ENCODE measurements at regions of chr20 and their contacts with region 1.

Region 1: GRCh38 chr20:64232794-64233193 is 22.8 kb upstream of the PCMTD2 start:
- DNase-seq: peak; percentile 53
- ATAC-seq: peak; percentile 49

Region 2: DNA sequence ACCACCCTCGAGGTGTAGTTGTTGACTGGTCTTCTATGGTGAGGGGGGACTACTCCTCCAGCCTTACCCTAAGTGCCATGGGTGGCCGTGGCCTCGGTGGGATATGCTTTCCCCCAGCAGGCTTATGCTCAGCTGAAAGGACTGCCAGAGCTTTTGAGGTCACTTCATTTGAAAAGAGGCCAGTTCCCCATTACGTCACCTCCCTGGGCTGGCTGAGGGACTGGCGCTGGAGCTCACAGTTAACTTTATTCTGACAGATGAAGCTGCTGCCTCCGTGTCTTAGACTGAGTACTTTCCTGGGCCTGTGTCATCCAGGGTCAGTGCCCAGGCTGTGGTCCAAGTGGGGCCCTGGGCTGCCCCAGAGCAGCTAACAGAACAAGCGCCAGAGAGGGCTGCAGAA is 20.0 kb before region 1 on chr20:
- intact Hi-C with region 1: loop called (anchors 2 kb)
- DNase-seq: peak; percentile 81
- ATAC-seq: peak; percentile 89

Region 3: DNA sequence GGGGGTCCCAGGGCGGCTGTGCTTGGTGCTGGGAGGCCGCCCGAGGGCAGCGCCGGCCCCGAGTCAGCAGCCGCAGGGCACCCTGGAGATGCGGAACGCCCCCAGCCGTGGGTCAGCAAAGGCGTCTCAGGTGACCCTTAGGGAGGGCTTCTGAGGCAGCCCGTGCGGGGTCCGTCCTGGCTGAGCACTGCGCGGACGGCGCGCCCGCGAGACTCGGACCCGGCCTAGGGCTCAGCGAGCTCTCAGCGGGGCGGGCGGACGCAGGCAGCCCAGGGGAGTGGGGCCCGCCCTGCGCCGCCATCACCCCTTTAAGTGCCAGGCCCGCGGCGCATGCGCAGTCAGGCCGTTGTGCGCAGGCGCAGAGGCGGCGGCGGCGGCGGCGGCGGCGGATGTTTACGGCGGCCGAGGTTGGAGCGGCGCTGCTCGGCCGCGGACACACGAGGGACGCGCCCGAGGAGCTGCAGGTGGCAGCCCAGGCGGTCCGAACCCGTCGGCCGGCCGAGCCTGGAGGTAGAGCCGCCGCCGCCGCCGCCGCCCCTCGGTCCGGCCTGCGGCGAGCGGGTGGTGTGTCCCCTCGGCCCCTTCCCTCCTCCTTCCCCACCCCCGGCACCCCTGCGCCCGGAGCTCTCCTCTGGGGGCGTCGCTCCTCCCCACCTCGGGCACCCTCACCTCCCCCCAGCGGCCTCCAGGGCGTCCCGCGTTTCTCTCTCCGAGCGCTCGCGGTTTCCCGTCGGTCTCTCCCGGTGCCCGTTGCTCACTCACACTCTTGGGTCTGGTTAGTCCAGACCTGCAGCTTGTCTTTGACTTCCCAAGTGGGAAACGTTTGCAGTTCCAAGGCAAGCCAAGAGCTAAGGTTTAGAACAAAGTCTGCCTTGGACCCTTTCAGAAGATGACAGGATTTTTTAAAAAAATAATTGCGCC is 22.8 kb after region 1 on chr20 and contains the start of gene PCMTD2:
- intact Hi-C with region 1: loop called (anchors 2 kb)
- DNase-seq: peak; percentile 93
- ATAC-seq: peak; percentile 94
- total RNA-seq, gene PCMTD2: 71.0 TPM

Measured in Right ventricle myocardium inferior (tissue), 1 donor.